ENCODE measurements at regions of chr15 and their contacts with region 1.

Region 1: GRCh38 chr15:39756806-39757522 is 25.7 kb downstream of the FSIP1 start:
- DNase-seq: no peak
- H3K4me3 ChIP-seq: no peak overlapping the region
- H3K27ac ChIP-seq: no peak overlapping the region
- H3K4me1 ChIP-seq: no peaks in the 10 kb centered on the region
- H3K27me3 ChIP-seq: no peaks in the 10 kb centered on the region
- CTCF ChIP-seq: peak in 2 of 3 experiments; percentile 46 to 57; a peak in 2 of 4 replicates
- EP300 ChIP-seq: no peak
- POLR2A ChIP-seq: no peak
- RAD21 ChIP-seq: peak; percentile 71 to 78

Region 2: GRCh38 chr15:39602143-39602542 is 154.8 kb before region 1 on chr15:
- CTCF ChIA-PET with region 1: interaction called, 62 read pairs
- POLR2A ChIA-PET with region 1: no interaction called
- DNase-seq: no peak
- H3K4me3 ChIP-seq: no peak overlapping the region
- H3K27ac ChIP-seq: no peak overlapping the region
- H3K4me1 ChIP-seq: no peaks in the 10 kb centered on the region
- H3K27me3 ChIP-seq: no peaks in the 10 kb centered on the region
- CTCF ChIP-seq: peak; percentile 53 to 72 (median 69)
- EP300 ChIP-seq: no peak
- POLR2A ChIP-seq: no peak
- RAD21 ChIP-seq: peak; percentile 71 to 77

Region 3: DNA sequence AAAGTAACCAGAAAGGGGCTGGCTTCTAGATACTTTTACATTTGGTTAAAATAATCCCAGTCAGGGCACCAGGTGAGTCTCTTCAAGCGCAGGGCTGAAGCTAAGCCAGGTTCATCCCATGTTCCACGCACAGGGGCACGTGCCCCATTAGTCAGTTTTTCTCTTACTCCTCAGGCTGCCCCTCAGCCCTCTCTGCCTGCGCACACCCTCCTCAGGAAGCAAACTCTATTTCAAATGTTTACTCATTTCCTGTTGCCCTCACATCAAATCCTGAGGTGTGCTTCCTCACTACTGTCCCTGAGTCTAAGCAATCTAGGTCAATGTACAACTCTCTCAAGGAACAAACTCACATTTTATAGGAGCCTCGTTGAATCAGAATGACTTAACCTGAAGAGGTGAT is 127.6 kb before region 1 on chr15:
- CTCF ChIA-PET with region 1: interaction called, 25 read pairs
- POLR2A ChIA-PET with region 1: no interaction called
- DNase-seq: no peak
- H3K4me3 ChIP-seq: no peak overlapping the region
- H3K27ac ChIP-seq: no peak overlapping the region
- H3K4me1 ChIP-seq: no peaks in the 10 kb centered on the region; a peak in 2 of 7 replicates
- H3K27me3 ChIP-seq: no peaks in the 10 kb centered on the region
- CTCF ChIP-seq: no peak
- EP300 ChIP-seq: no peak
- POLR2A ChIP-seq: no peak
- RAD21 ChIP-seq: no peak

Region 4: GRCh38 chr15:39686000-39686613 is 70.9 kb before region 1 on chr15:
- CTCF ChIA-PET with region 1: interaction called, 89 read pairs
- POLR2A ChIA-PET with region 1: no interaction called
- DNase-seq: no peak
- H3K4me3 ChIP-seq: no peak overlapping the region
- H3K27ac ChIP-seq: no peak overlapping the region
- H3K4me1 ChIP-seq: no peaks in the 10 kb centered on the region
- H3K27me3 ChIP-seq: no peaks in the 10 kb centered on the region
- CTCF ChIP-seq: peak in 2 of 3 experiments; percentile 69 to 77; a peak in 3 of 4 replicates
- EP300 ChIP-seq: no peak
- POLR2A ChIP-seq: no peak
- RAD21 ChIP-seq: peak; percentile 95

Region 5: GRCh38 chr15:39699516-39700374 is 57.2 kb before region 1 on chr15:
- CTCF ChIA-PET with region 1: interaction called, 18 read pairs
- POLR2A ChIA-PET with region 1: no interaction called
- DNase-seq: no peak
- H3K4me3 ChIP-seq: no peak overlapping the region
- H3K27ac ChIP-seq: no peak overlapping the region
- H3K4me1 ChIP-seq: peaks cover 0 to 4% (median 3%) of the 10 kb centered on the region in 4 experiments; a peak in 3 of 7 replicates
- H3K27me3 ChIP-seq: peaks cover 0 to 1% (median 0%) of the 10 kb centered on the region in 4 experiments; a peak in 1 of 7 replicates
- CTCF ChIP-seq: no peak
- EP300 ChIP-seq: no peak
- POLR2A ChIP-seq: no peak
- RAD21 ChIP-seq: no peak

Region 6: GRCh38 chr15:39736412-39737197 is 20.4 kb before region 1 on chr15:
- CTCF ChIA-PET with region 1: interaction called, 35 read pairs
- POLR2A ChIA-PET with region 1: no interaction called
- DNase-seq: no peak
- H3K4me3 ChIP-seq: no peak overlapping the region
- H3K27ac ChIP-seq: no peak overlapping the region
- H3K4me1 ChIP-seq: no peaks in the 10 kb centered on the region
- H3K27me3 ChIP-seq: no peaks in the 10 kb centered on the region
- CTCF ChIP-seq: no peak
- EP300 ChIP-seq: no peak
- POLR2A ChIP-seq: no peak
- RAD21 ChIP-seq: no peak

Region 7: DNA sequence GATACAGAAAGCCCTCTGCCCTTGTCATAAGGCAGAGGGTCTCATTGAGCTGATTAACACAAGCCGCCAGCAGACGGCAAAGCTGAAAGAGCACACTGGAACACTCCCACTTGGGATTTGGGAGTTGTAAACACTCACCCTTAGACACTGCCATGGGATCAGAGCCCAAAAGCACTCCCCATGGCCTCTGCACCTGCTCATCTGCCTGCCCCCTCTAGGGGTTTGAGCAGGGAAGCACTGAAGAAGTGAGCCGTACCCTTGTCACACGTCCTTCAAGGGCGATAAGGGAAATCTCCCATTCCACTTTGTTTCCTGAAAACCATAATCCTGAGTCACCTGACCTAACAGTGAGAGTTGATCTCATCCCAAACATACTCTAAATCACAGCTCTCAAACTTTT is 11.0 kb after region 1 on chr15:
- CTCF ChIA-PET with region 1: interaction called, 31 read pairs
- POLR2A ChIA-PET with region 1: no interaction called
- DNase-seq: no peak
- H3K4me3 ChIP-seq: no peak overlapping the region
- H3K27ac ChIP-seq: no peak overlapping the region
- H3K4me1 ChIP-seq: no peaks in the 10 kb centered on the region
- H3K27me3 ChIP-seq: no peaks in the 10 kb centered on the region
- CTCF ChIP-seq: peak; percentile 35 to 47 (median 45)
- EP300 ChIP-seq: no peak
- POLR2A ChIP-seq: no peak
- RAD21 ChIP-seq: peak; percentile 25 to 46; a peak in 3 of 4 replicates